ENCODE measurements at regions of chr5 and their contacts with region 1.

Region 1: DNA sequence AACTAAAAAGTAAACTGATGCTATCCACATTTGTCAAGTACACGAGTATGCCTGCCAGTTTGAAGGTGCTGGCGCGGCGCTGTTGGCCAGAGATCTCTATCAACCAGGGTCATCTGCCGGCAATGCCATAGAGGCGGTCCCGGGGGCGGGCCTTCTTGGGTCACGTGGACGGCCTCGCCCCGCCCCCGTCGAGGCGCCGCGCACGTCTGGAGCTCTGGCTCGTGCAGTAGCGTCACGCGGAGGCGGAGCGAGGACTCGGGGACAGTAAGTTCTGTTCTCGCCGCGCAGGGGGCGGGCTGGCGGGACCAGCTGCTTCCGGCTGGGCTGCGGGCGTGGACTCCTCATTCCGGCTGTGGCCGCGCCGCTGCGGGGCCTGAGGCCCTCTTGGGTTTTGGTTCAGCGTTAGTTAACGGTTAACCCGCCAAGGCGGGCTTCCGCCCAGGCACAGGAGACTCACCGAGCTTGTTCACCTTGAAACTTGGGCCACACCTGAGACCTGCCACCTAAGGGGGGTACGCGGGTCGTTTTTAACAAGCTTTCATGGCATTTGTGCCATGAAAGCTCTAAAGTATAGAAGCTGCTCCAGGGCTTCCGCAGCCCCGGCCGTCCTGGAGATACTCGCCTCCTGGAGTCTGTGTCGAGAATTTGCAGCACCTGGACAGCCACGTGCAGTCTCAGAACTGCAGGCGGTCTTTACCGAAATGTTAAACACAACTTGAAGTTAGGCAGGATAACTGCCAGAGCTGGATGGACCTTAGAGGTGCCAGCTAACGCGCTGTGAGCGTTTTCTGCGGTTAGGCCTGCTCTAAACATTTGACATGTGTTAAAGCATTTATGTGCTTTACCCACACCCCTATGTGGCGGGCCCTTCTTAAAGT is at the start of gene RFESD:
- DNase-seq: peak; percentile 96 to 100 (median 99)
- ATAC-seq: peak; percentile 99 to 100 (median 99)
- H3K4me3 ChIP-seq: peak within 1 kb of the TSS; percentile 28 to 76 (median 64)
- H3K27ac ChIP-seq: peak within 1 kb of the TSS; percentile 89 to 99 (median 95)
- H3K4me1 ChIP-seq: peaks cover 0 to 25% (median 9%) of the 10 kb centered on the region in 12 donors
- H3K27me3 ChIP-seq: no peaks in the 10 kb centered on the region
- CTCF ChIP-seq: peak in 5 of 12 donors; percentile 2 to 31 (median 11)
- POLR2A ChIP-seq: peak; percentile 88 to 94
- total RNA-seq, gene RFESD: 1.3 to 4.6 (median 3.5) TPM

Region 2: GRCh38 chr5:95773335-95774059 is 126.7 kb after region 1 on chr5:
- intact Hi-C with region 1: loop called in 3 of 10 experiments (anchors 5 to 10 kb)
- DNase-seq: no peak
- ATAC-seq: peak in 3 of 4 donors; percentile 14 to 49 (median 19)
- H3K4me3 ChIP-seq: no peak overlapping the region
- H3K27ac ChIP-seq: peak overlapping the region in 3 of 12 donors; percentile 11 to 37 (median 24)
- H3K4me1 ChIP-seq: peaks cover 0 to 30% (median 13%) of the 10 kb centered on the region in 12 donors
- H3K27me3 ChIP-seq: no peaks in the 10 kb centered on the region
- CTCF ChIP-seq: no peak
- POLR2A ChIP-seq: no peak

Region 3: GRCh38 chr5:95835682-95836385 is 189.0 kb after region 1 on chr5:
- intact Hi-C with region 1: loop called in 2 of 10 experiments (anchors 5 kb)
- DNase-seq: no peak
- ATAC-seq: peak in 3 of 4 donors; percentile 1 to 18 (median 18)
- H3K4me3 ChIP-seq: peak overlapping the region in 9 of 12 donors; percentile 59 to 74 (median 65)
- H3K27ac ChIP-seq: peak overlapping the region; percentile 24 to 98 (median 88)
- H3K4me1 ChIP-seq: peaks cover 0 to 62% (median 18%) of the 10 kb centered on the region in 12 donors
- H3K27me3 ChIP-seq: no peaks in the 10 kb centered on the region
- CTCF ChIP-seq: no peak
- POLR2A ChIP-seq: no peak

Region 4: DNA sequence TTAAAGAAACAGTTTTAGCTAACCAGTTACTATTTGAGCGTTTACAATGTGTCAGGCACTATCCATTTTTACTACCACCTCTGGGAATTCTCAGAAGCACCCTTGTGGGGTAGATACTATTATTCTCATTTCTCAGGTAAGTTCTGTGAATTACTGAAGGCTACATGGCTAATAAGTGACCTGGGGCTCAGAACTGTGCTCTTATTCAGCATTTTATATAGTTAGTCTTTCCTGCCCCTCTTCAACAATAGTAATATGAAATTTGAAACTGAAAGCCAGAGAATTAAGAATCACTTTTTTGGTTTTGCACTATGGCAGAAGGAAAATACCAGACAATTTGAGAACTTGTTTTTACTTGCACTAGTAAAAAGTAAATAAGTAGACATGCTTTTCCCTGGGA is 303.0 kb after region 1 on chr5:
- intact Hi-C with region 1: loop called in 1 of 10 experiments (anchors 10 kb)
- DNase-seq: no peak
- ATAC-seq: no peak
- H3K4me3 ChIP-seq: no peak overlapping the region
- H3K27ac ChIP-seq: no peak overlapping the region
- H3K4me1 ChIP-seq: peaks cover 0 to 40% (median 24%) of the 10 kb centered on the region in 12 donors
- H3K27me3 ChIP-seq: no peaks in the 10 kb centered on the region
- CTCF ChIP-seq: no peak
- POLR2A ChIP-seq: no peak

Measured in heart left ventricle (tissue), 16 donors.